ENCODE measurements at regions of chr14 and their contacts with region 1.

Region 1: GRCh38 chr14:101707068-101707842 is 54.3 kb upstream of the PPP2R5C start:
- DNase-seq: peak; percentile 73
- ATAC-seq: peak; percentile 71
- H3K4me3 Mint-ChIP-seq: peak overlapping the region; percentile 32
- H3K27ac Mint-ChIP-seq: peak overlapping the region; percentile 83
- H3K4me1 Mint-ChIP-seq: peaks cover 32% of the 10 kb centered on the region
- H3K27me3 Mint-ChIP-seq: no peaks in the 10 kb centered on the region
- CTCF ChIP-seq: peak; percentile 95

Region 2: DNA sequence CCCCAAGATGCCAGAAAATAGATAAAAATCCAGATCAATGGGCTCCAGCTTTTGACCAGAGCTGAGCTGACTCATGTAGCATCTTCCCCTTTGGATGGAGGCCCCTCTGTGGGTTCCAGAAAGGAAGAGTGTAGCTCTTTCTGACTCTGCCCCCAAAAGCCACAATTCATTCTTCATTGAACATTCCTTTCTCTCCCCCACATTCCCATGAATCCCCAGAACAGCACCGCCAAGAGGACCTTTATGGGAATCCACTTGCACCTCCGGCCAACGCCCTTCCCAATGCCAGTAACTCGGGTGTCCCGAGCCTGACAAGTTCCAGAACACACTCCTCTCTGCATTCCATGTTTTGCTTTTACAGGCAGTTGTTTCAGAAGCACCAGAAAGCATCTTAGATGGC is 356.6 kb before region 1 on chr14:
- CTCF ChIA-PET with region 1: no interaction called
- POLR2A ChIA-PET with region 1: no interaction called
- intact Hi-C with region 1: no loop called
- DNase-seq: no peak
- ATAC-seq: no peak
- H3K4me3 Mint-ChIP-seq: no peak overlapping the region
- H3K27ac Mint-ChIP-seq: no peak overlapping the region
- H3K4me1 Mint-ChIP-seq: no peaks in the 10 kb centered on the region
- H3K27me3 Mint-ChIP-seq: peaks cover 2% of the 10 kb centered on the region
- CTCF ChIP-seq: no peak

Region 3: DNA sequence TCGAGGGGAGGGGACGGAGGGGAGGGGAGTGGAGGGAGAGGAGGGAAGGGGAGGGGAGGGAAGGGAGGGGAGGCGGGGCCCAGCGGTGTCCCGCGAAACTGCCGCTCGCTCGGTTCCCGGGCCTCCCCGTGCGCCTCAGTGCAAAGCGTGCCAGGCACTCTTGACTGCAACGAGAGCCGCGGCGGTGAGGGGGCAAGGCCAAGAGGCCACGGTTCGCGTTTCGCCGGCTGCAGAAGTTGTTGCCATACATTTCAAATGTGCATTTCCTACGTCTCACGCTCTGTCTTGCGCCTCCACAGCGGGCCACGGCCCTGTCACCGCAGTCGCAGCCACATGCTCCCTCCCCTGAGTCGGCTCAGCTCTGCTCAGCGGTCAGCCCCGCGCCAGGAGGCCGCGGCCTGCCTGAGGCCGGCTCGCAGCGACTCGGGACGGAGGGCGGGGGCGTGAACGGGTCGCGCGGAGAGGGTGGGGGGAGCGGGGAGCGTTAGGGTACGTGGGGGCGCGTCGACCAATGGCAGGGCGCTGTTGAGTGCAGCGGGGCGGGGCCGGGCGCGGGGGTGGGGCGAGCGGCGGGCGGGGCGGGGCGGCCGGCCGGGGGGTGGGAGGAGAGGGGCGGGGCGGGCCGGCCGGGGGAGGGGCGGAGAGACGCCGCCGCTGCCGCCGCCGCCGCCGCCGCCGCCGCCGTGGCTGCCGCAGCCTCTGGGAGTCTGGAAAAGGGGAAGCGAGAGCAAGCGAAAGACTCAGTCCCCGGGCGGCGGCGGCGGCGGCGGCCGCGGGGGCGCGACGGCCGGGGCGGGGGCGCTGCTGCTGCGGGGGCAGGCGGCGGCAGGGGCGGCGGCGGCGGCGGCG is 54.0 kb after region 1 on chr14 and contains the start of gene PPP2R5C:
- CTCF ChIA-PET with region 1: interaction called, 12 read pairs
- POLR2A ChIA-PET with region 1: interaction called, 3 read pairs
- intact Hi-C with region 1: loop called (anchors 2 kb)
- DNase-seq: peak; percentile 91
- ATAC-seq: peak; percentile 66
- H3K4me3 Mint-ChIP-seq: peak within 1 kb of the TSS; percentile 84
- H3K27ac Mint-ChIP-seq: peak within 1 kb of the TSS; percentile 80
- H3K4me1 Mint-ChIP-seq: peaks cover 34% of the 10 kb centered on the region
- H3K27me3 Mint-ChIP-seq: no peaks in the 10 kb centered on the region
- CTCF ChIP-seq: no peak
- total RNA-seq, gene PPP2R5C: 238 to 242 TPM

Region 4: DNA sequence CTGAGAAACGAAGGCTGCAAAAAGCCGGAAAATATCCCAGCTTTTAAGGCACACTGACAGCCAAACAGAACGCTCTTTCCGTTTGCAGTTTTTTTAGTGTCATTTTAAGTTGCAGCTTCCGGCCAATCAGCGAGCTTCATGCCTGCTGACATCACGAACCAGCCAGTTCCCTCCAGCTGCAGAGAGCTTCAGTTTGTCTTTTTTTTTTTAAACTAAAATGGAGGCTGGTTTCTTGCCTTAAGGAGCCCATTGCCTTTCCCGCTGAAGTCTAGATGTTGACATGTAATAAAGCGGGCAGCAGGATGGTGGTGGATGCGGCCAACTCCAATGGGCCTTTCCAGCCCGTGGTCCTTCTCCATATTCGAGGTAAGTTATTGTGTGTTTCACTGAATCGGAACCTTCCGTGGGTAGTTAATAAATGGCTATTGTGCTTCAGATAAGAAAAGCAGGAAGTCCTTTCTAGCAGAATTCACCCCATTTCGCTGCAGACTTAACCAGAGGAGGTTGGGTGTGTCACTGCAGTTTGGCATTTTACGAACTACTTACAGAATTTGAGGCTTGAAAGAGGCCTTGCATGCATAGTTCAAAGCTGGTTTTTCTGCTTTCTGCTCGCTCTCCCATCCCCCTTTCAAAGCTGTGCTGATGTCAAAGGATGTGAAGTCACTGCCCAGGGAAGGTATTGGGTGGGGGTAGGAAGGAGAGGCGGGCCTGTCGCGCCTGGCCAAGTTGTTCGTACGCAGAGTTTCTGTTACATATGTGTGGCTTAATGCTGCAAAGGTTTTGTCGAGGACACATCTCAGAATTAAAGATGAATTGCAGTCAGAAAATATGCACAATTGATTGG is 102.6 kb after region 1 on chr14:
- CTCF ChIA-PET with region 1: interaction called, 20 read pairs
- POLR2A ChIA-PET with region 1: interaction called, 7 read pairs
- intact Hi-C with region 1: no loop called
- DNase-seq: peak; percentile 92
- ATAC-seq: peak; percentile 90
- H3K4me3 Mint-ChIP-seq: peak overlapping the region; percentile 79
- H3K27ac Mint-ChIP-seq: peak overlapping the region; percentile 95
- H3K4me1 Mint-ChIP-seq: peaks cover 38% of the 10 kb centered on the region
- H3K27me3 Mint-ChIP-seq: no peaks in the 10 kb centered on the region
- CTCF ChIP-seq: no peak

Region 5: GRCh38 chr14:101947906-101948665 is 240.8 kb after region 1 on chr14:
- CTCF ChIA-PET with region 1: interaction called, 4 read pairs
- POLR2A ChIA-PET with region 1: interaction called, 3 read pairs
- intact Hi-C with region 1: loop called (anchors 2 kb)
- DNase-seq: peak; percentile 100
- ATAC-seq: peak; percentile 99
- H3K4me3 Mint-ChIP-seq: peak overlapping the region; percentile 91
- H3K27ac Mint-ChIP-seq: peak overlapping the region; percentile 96
- H3K4me1 Mint-ChIP-seq: peaks cover 10% of the 10 kb centered on the region
- H3K27me3 Mint-ChIP-seq: peaks cover 18% of the 10 kb centered on the region
- CTCF ChIP-seq: no peak